ENCODE measurements at regions of chr17 and their contacts with region 1.

Region 1: DNA sequence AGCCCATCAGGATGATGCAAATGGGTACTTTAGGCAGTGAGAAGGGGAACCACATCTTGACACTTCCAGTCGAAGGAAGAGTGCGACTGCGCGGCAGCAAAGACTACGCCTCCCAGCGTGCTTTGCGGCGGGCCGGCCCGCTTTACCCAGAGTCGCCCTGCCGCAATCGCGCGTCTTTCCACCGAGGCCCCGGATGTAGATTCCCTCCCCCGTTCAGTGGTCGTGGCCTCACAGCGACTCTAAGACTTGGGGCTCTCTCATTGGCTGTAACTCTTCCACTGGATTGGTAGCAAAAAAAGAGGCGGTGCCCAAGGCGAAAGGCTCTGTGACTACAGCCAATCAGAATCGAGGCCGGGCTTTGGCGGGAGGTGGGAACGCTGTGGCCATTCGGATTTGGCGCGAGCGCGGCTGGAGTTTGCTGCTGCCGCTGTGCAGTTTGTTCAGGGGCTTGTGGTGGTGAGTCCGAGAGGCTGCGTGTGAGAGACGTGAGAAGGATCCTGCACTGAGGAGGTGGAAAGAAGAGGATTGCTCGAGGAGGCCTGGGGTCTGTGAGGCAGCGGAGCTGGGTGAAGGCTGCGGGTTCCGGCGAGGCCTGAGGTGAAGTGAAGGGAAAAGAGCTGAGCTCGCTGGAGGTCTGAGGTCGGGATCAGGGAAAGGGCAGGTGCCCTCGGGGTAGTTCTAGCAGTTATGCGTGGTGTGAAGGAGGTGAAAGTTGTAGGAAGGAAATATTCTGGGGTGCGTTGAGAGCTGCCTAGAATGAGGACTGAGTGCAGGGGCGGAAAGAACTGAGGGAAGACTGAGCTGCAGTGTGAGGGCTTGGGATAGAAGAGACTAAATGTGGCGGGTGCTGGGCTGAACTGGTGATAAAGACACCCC is at the start of gene CDC6:
- DNase-seq: peak in 1 of 2 donors; percentile 99
- H3K4me3 ChIP-seq: peak within 1 kb of the TSS; percentile 43 to 49
- H3K27ac ChIP-seq: peak within 1 kb of the TSS; percentile 52
- H3K4me1 ChIP-seq: peaks cover 36% of the 10 kb centered on the region
- H3K27me3 ChIP-seq: no peaks in the 10 kb centered on the region
- CTCF ChIP-seq: no peak
- POLR2A ChIP-seq: no peak
- total RNA-seq, gene CDC6: 3.7 TPM

Region 2: DNA sequence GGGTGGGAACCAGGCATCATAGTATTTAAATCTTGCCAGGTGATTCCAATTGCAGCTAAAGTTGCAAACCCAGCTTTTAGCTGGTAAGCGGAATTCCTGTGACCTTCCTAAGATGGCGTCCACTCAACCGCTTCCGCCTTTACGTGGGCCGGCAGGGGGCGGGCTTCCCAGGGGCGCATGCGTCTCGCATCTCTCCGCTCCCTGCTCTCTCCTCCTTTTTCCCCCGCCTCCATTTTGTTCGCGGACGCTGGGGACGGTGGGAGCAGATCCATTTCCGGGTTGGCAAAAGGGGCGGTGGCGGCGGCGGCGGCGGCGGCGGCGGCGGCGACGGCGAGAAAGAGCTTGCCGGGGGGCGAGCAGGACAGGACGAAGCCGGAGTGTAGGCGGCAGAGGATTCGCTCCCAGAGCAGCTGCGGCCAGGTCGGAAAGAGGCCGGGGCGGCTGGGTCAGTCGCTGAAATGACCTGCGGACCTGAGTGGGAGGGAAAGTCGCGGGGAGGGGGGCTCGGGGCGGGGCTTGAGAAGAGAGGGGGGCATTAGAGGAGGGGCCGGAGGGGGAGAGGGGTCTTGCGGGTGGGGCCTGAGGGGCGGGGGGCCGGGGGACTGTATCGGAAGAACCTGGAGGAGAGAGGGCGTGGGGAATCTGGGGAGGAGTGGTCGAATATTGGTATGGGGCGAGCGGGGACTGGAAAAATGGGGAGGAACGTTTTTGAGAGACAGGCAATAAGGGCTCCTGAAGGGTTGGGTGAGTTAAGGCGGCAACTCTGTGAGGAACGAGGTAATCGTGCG is 68.5 kb before region 1 on chr17 and contains the start of gene WIPF2:
- intact Hi-C with region 1: loop called (anchors 5 kb)
- DNase-seq: peak in 1 of 2 donors; percentile 93
- H3K4me3 ChIP-seq: peak within 1 kb of the TSS; percentile 60 to 76
- H3K27ac ChIP-seq: peak within 1 kb of the TSS; percentile 82
- H3K4me1 ChIP-seq: peaks cover 29% of the 10 kb centered on the region
- H3K27me3 ChIP-seq: no peaks in the 10 kb centered on the region
- CTCF ChIP-seq: peak; percentile 63 to 82 (median 81)
- POLR2A ChIP-seq: peak in 1 of 2 donors; percentile 65
- total RNA-seq, gene WIPF2: 10.6 TPM

Region 3: GRCh38 chr17:40577611-40578065 is 289.9 kb after region 1 on chr17:
- intact Hi-C with region 1: no loop called
- DNase-seq: no peak
- H3K4me3 ChIP-seq: no peak overlapping the region
- H3K27ac ChIP-seq: no peak overlapping the region
- H3K4me1 ChIP-seq: peaks cover 10% of the 10 kb centered on the region
- H3K27me3 ChIP-seq: no peaks in the 10 kb centered on the region
- CTCF ChIP-seq: no peak
- POLR2A ChIP-seq: no peak

Measured in vagina (tissue), 2 donors.